HCT116 (cell line): ENCODE measurements at regions of chr16 and their contacts with region 1.

Region 1: GRCh38 chr16:24504472-24505345 is 34.7 kb upstream of the RBBP6 start:
- DNase-seq: peak; percentile 74
- ATAC-seq: peak; percentile 98
- H3K4me3 ChIP-seq: no peak overlapping the region; a peak in 2 of 4 replicates
- H3K27ac ChIP-seq: no peak overlapping the region
- H3K4me1 ChIP-seq: peaks cover 0 to 9% of the 10 kb centered on the region in 2 experiments; a peak in 3 of 4 replicates
- H3K27me3 ChIP-seq: no peaks in the 10 kb centered on the region
- CTCF ChIP-seq: peak; percentile 76 to 82 (median 81)
- POLR2A ChIP-seq: no peak
- RAD21 ChIP-seq: peak; percentile 86

Region 2: GRCh38 chr16:24036614-24037013 is 468.1 kb before region 1 on chr16:
- CTCF ChIA-PET with region 1: interaction called, 101 read pairs
- POLR2A ChIA-PET with region 1: interaction called, 3 read pairs
- RAD21 ChIA-PET with region 1: interaction called, 8 to 10 read pairs
- intact Hi-C with region 1: no loop called
- DNase-seq: peak; percentile 29
- ATAC-seq: peak; percentile 86
- H3K4me3 ChIP-seq: no peak overlapping the region
- H3K27ac ChIP-seq: no peak overlapping the region
- H3K4me1 ChIP-seq: no peaks in the 10 kb centered on the region
- H3K27me3 ChIP-seq: no peaks in the 10 kb centered on the region
- CTCF ChIP-seq: peak; percentile 61 to 79 (median 65)
- POLR2A ChIP-seq: no peak
- RAD21 ChIP-seq: peak; percentile 88

Region 3: GRCh38 chr16:24070851-24071250 is 433.9 kb before region 1 on chr16:
- CTCF ChIA-PET with region 1: interaction called, 37 read pairs
- POLR2A ChIA-PET with region 1: no interaction called
- RAD21 ChIA-PET with region 1: interaction called, 4 to 7 read pairs
- intact Hi-C with region 1: no loop called
- DNase-seq: peak; percentile 43
- ATAC-seq: peak; percentile 97
- H3K4me3 ChIP-seq: no peak overlapping the region
- H3K27ac ChIP-seq: no peak overlapping the region
- H3K4me1 ChIP-seq: no peaks in the 10 kb centered on the region
- H3K27me3 ChIP-seq: peaks cover 35% of the 10 kb centered on the region
- CTCF ChIP-seq: peak; percentile 38 to 75 (median 66); a peak in 5 of 6 replicates
- POLR2A ChIP-seq: no peak
- RAD21 ChIP-seq: peak; percentile 62

Region 4: GRCh38 chr16:24228514-24228913 is 276.2 kb before region 1 on chr16:
- CTCF ChIA-PET with region 1: no interaction called
- POLR2A ChIA-PET with region 1: no interaction called
- RAD21 ChIA-PET with region 1: no interaction called
- intact Hi-C with region 1: no loop called
- DNase-seq: no peak
- ATAC-seq: no peak
- H3K4me3 ChIP-seq: no peak overlapping the region
- H3K27ac ChIP-seq: no peak overlapping the region
- H3K4me1 ChIP-seq: no peaks in the 10 kb centered on the region
- H3K27me3 ChIP-seq: peaks cover 24% of the 10 kb centered on the region; the same call in 1 of the 2 replicates
- CTCF ChIP-seq: no peak
- POLR2A ChIP-seq: no peak
- RAD21 ChIP-seq: no peak

Region 5: GRCh38 chr16:24309222-24309905 is 195.3 kb before region 1 on chr16:
- CTCF ChIA-PET with region 1: interaction called, 4 read pairs
- POLR2A ChIA-PET with region 1: no interaction called
- RAD21 ChIA-PET with region 1: no interaction called
- intact Hi-C with region 1: loop called (anchors 5 kb)
- DNase-seq: peak; percentile 36
- ATAC-seq: peak; percentile 60
- H3K4me3 ChIP-seq: no peak overlapping the region
- H3K27ac ChIP-seq: no peak overlapping the region
- H3K4me1 ChIP-seq: peaks cover 6 to 8% of the 10 kb centered on the region in 2 experiments; a peak in 2 of 4 replicates
- H3K27me3 ChIP-seq: peaks cover 31% of the 10 kb centered on the region
- CTCF ChIP-seq: no peak
- POLR2A ChIP-seq: no peak
- RAD21 ChIP-seq: no peak

Region 6: DNA sequence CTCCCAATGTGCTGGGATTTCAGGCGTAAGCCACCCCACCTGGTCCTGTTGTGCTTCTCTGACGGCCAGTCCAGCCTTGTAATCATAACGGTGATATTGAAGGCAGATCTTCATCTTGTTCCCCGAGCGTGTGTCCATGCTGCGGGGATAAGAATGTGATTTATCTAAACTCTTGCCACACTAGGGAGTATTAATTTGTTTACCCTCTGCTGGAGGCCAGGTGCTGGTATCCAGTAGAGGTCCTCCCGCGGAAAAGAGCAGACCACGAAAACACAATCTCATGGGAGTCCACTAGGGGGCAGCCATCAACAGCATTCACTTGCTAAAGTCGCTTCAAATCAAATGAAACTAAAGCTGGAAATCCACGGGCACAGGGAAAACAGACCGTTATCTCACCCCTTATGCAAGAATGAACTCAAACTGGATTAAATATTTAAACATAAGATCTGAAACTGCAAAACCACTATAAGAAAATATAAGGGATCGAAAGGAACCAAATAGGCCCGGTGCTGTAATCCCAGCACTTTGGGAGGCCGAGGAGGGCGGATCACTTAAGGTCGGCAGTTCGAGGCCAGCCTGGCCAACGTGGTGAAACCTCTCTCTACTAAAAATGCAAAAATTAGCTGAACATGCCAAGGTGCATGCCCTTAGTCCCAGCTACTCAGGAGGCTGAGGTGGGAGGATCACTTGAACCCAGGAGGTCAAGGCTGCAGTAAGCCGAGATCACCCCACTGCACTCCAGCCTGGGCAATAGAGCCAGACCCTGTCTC is 12.4 kb after region 1 on chr16:
- CTCF ChIA-PET with region 1: interaction called, 19 read pairs
- POLR2A ChIA-PET with region 1: no interaction called
- RAD21 ChIA-PET with region 1: no interaction called
- intact Hi-C with region 1: no loop called
- DNase-seq: peak; percentile 78
- ATAC-seq: peak; percentile 95
- H3K4me3 ChIP-seq: peak overlapping the region; percentile 34
- H3K27ac ChIP-seq: no peak overlapping the region
- H3K4me1 ChIP-seq: peaks cover 0 to 6% of the 10 kb centered on the region in 2 experiments; a peak in 1 of 4 replicates
- H3K27me3 ChIP-seq: no peaks in the 10 kb centered on the region
- CTCF ChIP-seq: peak; percentile 92 to 98 (median 95)
- POLR2A ChIP-seq: no peak
- RAD21 ChIP-seq: peak; percentile 90